ENCODE measurements at regions of chr1 and their contacts with region 1.

Region 1: DNA sequence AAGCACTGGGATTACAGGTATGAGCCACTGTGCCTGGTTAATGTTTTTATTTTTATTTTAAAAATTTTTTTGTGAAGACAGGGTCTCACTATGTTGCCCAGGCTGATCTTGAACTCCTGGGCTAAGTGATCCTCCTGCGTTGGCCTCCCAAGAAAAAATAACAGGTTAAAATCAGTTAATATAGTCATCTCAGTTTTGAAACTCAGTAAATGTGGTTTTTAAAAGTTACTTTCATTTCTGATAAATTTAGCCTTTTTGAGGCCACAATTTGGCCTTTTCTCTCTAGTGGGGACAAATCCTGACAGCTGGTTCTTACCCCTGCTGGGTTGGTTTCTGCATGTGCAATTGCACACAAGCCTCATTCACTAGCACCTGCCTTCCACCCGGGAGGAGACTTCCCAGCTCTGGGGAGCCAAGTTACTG is 13.3 kb downstream of the PMF1 start:
- DNase-seq: no peak
- H3K4me3 Mint-ChIP-seq: no peak overlapping the region
- H3K27ac Mint-ChIP-seq: peak overlapping the region; percentile 83
- H3K4me1 Mint-ChIP-seq: peaks cover 50% of the 10 kb centered on the region
- H3K27me3 Mint-ChIP-seq: no peaks in the 10 kb centered on the region

Region 2: DNA sequence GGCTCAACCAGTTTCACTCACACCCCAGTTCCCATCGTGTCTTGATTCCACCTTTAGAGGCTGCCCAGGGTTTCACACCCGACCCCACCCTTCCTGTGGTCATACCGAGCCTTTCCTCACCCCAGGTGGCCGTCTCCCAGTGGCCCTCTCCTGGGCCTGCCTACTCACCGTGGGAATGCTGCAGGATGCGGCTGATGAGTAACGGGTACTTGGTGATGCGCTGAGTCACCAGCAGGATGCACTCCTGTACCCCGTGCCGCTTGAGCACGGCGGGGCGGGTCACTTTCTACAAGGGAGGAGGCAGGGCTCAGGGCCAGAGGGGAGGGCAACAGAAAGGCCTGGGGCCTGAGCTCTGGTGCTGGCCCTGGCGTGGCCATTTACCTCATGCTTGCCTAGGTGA is 264.2 kb before region 1 on chr1:
- intact Hi-C with region 1: no loop called
- DNase-seq: no peak
- H3K4me3 Mint-ChIP-seq: no peak overlapping the region
- H3K27ac Mint-ChIP-seq: peak overlapping the region; percentile 49
- H3K4me1 Mint-ChIP-seq: peaks cover 18% of the 10 kb centered on the region
- H3K27me3 Mint-ChIP-seq: no peaks in the 10 kb centered on the region

Region 3: DNA sequence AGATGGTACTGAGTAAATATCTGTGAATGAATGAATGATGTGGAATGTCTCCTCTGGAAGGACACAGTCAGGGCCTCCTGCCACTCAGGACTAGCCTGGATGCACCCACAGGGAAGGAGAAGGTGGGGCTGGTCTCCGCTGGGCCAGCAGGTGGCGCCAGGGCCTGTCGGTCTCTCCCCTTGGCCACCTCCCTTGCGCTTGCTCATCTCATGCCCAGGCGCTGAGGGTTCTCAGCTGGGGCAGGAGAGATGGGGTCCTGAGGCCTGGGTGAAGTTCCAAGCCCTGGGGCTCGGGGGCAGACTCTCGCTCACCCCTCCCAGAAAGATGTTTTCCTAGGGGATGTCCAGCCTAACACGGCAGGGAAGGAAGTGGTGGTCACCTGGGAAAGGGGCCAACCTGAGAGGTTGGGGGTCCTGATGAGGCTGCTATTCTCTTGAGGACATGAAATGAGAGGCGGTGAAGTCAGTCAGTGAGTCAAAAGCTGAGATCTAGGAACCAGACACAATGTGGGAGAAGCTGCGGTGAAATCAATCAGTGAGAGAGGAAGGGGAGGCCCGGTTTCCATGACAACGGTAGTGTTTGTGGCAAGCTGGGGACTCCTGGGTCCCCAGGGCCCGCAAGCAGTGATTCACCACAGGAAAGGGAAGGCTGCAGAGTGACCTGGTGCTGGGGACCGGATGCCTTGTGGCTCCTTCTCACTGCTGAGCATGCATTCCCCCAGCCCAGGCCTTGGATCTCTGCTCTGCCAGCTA is 129.3 kb before region 1 on chr1:
- intact Hi-C with region 1: loop called (anchors 2 kb)
- DNase-seq: peak; percentile 71
- H3K4me3 Mint-ChIP-seq: peak overlapping the region; percentile 49
- H3K27ac Mint-ChIP-seq: peak overlapping the region; percentile 95
- H3K4me1 Mint-ChIP-seq: peaks cover 45% of the 10 kb centered on the region
- H3K27me3 Mint-ChIP-seq: peaks cover 5% of the 10 kb centered on the region

Region 4: GRCh38 chr1:156160743-156161171 is 65.4 kb before region 1 on chr1:
- intact Hi-C with region 1: loop called (anchors 1 kb)
- DNase-seq: peak; percentile 49
- H3K4me3 Mint-ChIP-seq: peak overlapping the region; percentile 77
- H3K27ac Mint-ChIP-seq: peak overlapping the region; percentile 93
- H3K4me1 Mint-ChIP-seq: peaks cover 72% of the 10 kb centered on the region
- H3K27me3 Mint-ChIP-seq: no peaks in the 10 kb centered on the region

Region 5: GRCh38 chr1:156198831-156199349 is 27.2 kb before region 1 on chr1:
- intact Hi-C with region 1: loop called (anchors 1 kb)
- DNase-seq: no peak
- H3K4me3 Mint-ChIP-seq: peak overlapping the region; percentile 76
- H3K27ac Mint-ChIP-seq: peak overlapping the region; percentile 95
- H3K4me1 Mint-ChIP-seq: peaks cover 55% of the 10 kb centered on the region
- H3K27me3 Mint-ChIP-seq: no peaks in the 10 kb centered on the region

Measured in activated T-helper 2 cell treated with anti-CD3 and anti-CD28 coated beads, Interferon-gamma antibody, Interleukin-2, Interleukin-4, amounts not matched to agents 10 μg/mL and 5 μg/mL and 100 μg/mL, durations not matched to agents 14 hours and 24 hours and 36 hours (primary cell).